Colonic mucosa (tissue), 4 donors: ENCODE measurements at regions of chr14 and their contacts with region 1.

Region 1: GRCh38 chr14:73633116-73634010 is 11.4 kb upstream of the DNAL1 start:
- DNase-seq: peak; percentile 74
- H3K4me3 ChIP-seq: peak overlapping the region; percentile 61
- H3K27ac ChIP-seq: no peak overlapping the region
- H3K4me1 ChIP-seq: no peaks in the 10 kb centered on the region
- H3K27me3 ChIP-seq: no peaks in the 10 kb centered on the region
- CTCF ChIP-seq: peak; percentile 87

Region 2: DNA sequence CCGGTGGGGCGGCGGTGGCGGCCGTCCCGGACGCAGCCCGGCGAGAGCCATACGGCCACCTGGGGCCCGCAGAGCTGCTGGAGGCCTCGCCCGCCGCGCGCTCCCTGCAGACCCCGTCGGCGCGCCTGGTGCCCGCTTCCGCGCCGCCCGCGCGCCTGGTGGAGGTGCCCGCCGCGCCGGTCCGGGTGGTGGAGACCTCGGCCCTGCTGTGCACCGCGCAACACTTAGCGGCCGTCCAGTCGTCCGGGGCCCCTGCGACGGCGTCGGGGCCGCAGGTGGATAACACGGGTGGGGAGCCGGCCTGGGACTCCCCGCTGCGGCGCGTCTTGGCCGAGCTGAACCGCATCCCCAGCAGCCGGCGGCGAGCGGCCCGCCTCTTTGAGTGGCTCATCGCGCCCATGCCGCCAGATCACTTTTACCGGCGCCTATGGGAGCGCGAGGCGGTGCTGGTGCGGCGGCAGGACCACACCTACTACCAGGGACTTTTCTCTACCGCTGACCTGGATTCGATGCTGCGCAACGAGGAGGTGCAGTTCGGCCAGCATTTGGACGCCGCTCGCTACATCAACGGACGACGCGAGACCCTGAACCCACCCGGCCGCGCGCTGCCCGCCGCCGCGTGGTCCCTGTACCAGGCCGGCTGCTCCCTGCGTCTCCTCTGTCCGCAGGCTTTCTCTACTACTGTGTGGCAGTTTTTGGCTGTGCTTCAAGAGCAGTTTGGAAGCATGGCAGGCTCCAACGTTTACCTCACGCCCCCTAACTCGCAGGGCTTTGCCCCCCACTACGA is 141.9 kb before region 1 on chr14:
- intact Hi-C with region 1: no loop called
- DNase-seq: peak; percentile 80
- H3K4me3 ChIP-seq: peak overlapping the region; percentile 71
- H3K27ac ChIP-seq: peak overlapping the region; percentile 90
- H3K4me1 ChIP-seq: peaks cover 7% of the 10 kb centered on the region
- H3K27me3 ChIP-seq: no peaks in the 10 kb centered on the region
- CTCF ChIP-seq: no peak

Region 3: GRCh38 chr14:73503648-73504047 is 129.7 kb before region 1 on chr14:
- intact Hi-C with region 1: loop called (anchors 10 kb)
- DNase-seq: no peak
- H3K4me3 ChIP-seq: no peak overlapping the region
- H3K27ac ChIP-seq: no peak overlapping the region
- H3K4me1 ChIP-seq: no peaks in the 10 kb centered on the region
- H3K27me3 ChIP-seq: no peaks in the 10 kb centered on the region
- CTCF ChIP-seq: no peak